ENCODE measurements at regions of chr19 and their contacts with region 1.

Region 1: DNA sequence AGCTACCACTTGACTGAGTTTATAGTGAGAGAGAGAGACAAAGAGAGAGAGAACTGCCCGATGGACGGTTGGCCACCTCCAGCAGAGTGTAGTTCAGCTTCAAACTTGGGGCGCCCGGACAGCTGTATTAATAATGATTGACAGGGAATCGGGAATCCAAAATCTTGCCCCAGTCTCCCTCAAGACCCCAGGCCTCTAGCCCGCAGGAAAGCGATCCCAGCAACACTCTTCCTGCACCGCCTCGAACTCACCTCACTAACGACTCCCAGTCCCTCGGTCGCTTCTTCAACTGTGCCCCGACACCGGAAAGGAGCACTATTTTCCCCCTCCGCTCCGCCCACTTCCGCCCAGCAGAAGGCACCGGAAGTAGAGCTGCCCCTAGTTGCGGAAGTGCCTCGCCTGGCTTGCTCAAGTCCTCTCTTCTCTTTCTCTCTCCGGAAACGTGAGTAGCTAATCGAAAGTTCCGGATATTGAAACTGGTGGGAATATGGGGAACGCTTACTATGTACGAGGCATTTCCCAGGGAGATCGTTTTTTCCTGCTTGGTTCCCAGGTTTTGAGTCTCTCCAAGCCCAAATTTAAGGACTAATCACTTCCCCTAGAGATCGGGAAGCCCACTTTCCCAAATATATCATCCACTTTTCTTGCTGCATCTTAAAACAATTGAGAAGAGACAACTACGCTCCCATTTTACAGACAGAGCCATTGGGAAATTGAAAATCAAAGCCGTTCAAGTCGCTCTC is at the start of gene NOSIP:
- DNase-seq: peak; percentile 94 to 99
- ATAC-seq: peak; percentile 98 to 99
- H3K4me3 ChIP-seq: peak within 1 kb of the TSS; percentile 63
- H3K27ac ChIP-seq: peak within 1 kb of the TSS; percentile 68 to 88
- H3K4me1 ChIP-seq: peaks cover 8% of the 10 kb centered on the region; the same call in 2 of the 3 replicates
- CTCF ChIP-seq: no peak
- EP300 ChIP-seq: no peak
- POLR2A ChIP-seq: peak; percentile 99
- RAD21 ChIP-seq: 0 out of 5 replicates have a peak, but pooled peaks of 1 of the 2 experiments have one; percentile 4
- polyA plus RNA-seq, gene NOSIP: 49.0 and 52.5 TPM in 2 replicates

Region 2: GRCh38 chr19:49497047-49497788 is 83.2 kb before region 1 on chr19:
- CTCF ChIA-PET with region 1: interaction called, 201 read pairs
- POLR2A ChIA-PET with region 1: interaction called, 11 read pairs
- DNase-seq: peak; percentile 77 to 79
- ATAC-seq: peak in 1 of 2 experiments; percentile 7; a peak in 2 of 6 replicates
- H3K4me3 ChIP-seq: peak overlapping the region; percentile 97
- H3K27ac ChIP-seq: peak overlapping the region; percentile 93 to 97
- H3K4me1 ChIP-seq: peaks cover 34% of the 10 kb centered on the region
- CTCF ChIP-seq: no peak
- EP300 ChIP-seq: no peak
- POLR2A ChIP-seq: peak; percentile 64
- RAD21 ChIP-seq: no peak

Measured in A549 (cell line).